Activated CD4-positive, alpha-beta memory T cell treated with anti-CD3 and anti-CD28 coated beads for 36 hours (primary cell): ENCODE measurements at regions of chr1 and their contacts with region 1.

Region 1: GRCh38 chr1:110674337-110675059 is at the start of gene KCNA3:
- DNase-seq: peak; percentile 72
- H3K4me3 Mint-ChIP-seq: peak within 1 kb of the TSS; percentile 95
- H3K27ac Mint-ChIP-seq: peak within 1 kb of the TSS; percentile 97
- H3K4me1 Mint-ChIP-seq: peaks cover 29% of the 10 kb centered on the region
- H3K27me3 Mint-ChIP-seq: no peaks in the 10 kb centered on the region
- total RNA-seq, gene KCNA3: 25.2 to 25.6 TPM

Region 2: DNA sequence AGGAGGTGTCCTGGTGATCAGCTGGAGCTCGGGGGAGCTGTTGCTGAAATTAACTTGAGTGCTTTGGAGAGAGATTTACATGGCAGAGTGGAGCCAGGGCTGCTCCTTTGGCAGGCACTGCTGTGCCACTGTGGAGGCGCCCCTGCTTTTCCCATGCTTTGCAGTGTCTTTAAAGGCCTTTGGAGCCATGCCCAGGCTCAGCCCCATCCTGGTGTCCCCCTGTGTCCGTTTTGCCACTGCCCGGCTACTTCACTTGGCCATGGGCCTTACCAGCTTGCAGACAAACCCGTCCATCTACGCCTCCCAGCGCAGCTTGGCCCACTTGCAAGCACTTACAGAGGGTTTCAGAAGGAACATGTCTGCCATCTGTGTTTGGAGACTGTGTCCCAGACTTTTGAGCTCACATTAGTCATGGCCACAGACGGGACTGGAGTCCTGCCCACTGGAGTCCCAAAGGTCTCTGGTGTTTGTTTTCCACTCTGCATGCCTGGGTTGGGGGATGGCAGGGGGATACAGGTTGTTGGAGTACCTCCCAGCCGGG is 248.8 kb before region 1 on chr1:
- CTCF ChIA-PET with region 1: no interaction called
- POLR2A ChIA-PET with region 1: no interaction called
- intact Hi-C with region 1: no loop called
- DNase-seq: no peak
- H3K4me3 Mint-ChIP-seq: no peak overlapping the region
- H3K27ac Mint-ChIP-seq: no peak overlapping the region
- H3K4me1 Mint-ChIP-seq: no peaks in the 10 kb centered on the region
- H3K27me3 Mint-ChIP-seq: peaks cover 1% of the 10 kb centered on the region

Region 3: DNA sequence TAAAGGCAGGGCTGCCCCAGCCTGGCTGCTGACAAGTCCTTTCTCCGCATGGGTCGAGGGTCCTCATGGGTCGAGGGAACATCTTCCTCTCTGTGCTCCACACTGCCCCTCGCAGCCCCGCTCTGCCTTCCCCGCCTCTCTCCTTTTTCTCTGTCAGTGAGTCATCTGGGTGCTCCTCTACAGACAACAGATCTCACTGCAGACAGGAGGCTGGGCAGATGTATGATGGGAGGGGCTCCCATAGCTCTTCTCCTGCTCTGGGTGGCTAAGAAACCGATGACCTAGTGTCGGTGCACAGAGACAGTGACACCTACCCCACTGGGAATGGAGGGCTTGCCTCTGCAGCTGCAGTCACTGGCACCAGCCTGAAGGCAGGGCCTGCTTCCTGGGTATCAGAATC is 161.0 kb before region 1 on chr1:
- CTCF ChIA-PET with region 1: no interaction called
- POLR2A ChIA-PET with region 1: no interaction called
- intact Hi-C with region 1: no loop called
- DNase-seq: no peak
- H3K4me3 Mint-ChIP-seq: no peak overlapping the region
- H3K27ac Mint-ChIP-seq: no peak overlapping the region
- H3K4me1 Mint-ChIP-seq: no peaks in the 10 kb centered on the region
- H3K27me3 Mint-ChIP-seq: peaks cover 6% of the 10 kb centered on the region

Region 4: DNA sequence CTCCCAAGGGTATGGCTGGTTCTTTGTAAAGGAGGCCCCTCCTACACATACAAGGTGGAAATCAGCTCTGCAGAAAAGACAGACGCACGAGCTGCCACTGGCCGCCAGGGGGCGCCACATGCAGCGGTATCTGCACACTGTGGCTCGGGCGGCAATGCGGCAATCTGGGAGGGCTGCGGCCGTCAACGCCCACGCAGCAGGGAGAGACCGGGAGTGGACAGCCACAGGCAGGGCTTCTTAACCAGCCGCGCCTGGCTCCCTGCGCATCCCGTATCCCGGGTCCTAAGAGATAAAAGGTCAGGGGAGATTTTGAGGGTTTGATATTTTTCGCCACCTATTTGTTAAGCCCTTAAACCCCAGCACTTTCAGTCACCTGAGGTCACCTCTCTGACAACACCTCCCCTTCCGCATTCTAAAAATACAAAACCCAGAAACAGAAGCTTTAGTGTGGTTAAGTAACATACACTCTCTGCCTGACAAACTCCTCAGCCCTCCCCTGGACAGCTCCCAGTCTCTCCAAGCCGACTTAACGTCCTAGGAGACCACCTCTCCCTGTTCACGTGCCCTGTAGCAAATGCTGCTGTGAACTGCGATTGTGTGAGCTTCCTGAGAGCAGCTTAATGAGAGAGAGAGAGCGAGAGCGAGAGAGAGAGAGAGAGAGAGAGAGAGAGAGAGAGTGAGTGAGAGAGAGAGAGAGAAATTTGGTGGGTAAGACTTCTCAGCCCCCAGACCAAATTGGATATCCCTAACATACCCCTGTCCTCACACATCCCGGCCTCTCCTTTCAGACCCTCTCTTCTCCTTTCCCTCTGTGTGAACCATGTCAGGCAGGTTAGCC is 54.9 kb before region 1 on chr1:
- CTCF ChIA-PET with region 1: interaction called, 25 read pairs
- POLR2A ChIA-PET with region 1: interaction called, 5 read pairs
- intact Hi-C with region 1: no loop called
- DNase-seq: peak; percentile 93
- H3K4me3 Mint-ChIP-seq: peak overlapping the region; percentile 75
- H3K27ac Mint-ChIP-seq: peak overlapping the region; percentile 79
- H3K4me1 Mint-ChIP-seq: peaks cover 25% of the 10 kb centered on the region
- H3K27me3 Mint-ChIP-seq: no peaks in the 10 kb centered on the region

Region 5: GRCh38 chr1:110645821-110646735 is 28.4 kb before region 1 on chr1:
- CTCF ChIA-PET with region 1: interaction called, 7 read pairs
- POLR2A ChIA-PET with region 1: interaction called, 92 read pairs
- intact Hi-C with region 1: loop called (anchors 1 kb)
- DNase-seq: no peak
- H3K4me3 Mint-ChIP-seq: peak overlapping the region; percentile 1
- H3K27ac Mint-ChIP-seq: peak overlapping the region; percentile 70
- H3K4me1 Mint-ChIP-seq: peaks cover 42% of the 10 kb centered on the region
- H3K27me3 Mint-ChIP-seq: no peaks in the 10 kb centered on the region

Region 6: GRCh38 chr1:110872745-110873720 is 198.5 kb after region 1 on chr1 and contains the start of gene CD53:
- CTCF ChIA-PET with region 1: no interaction called
- POLR2A ChIA-PET with region 1: interaction called, 41 read pairs
- intact Hi-C with region 1: loop called (anchors 1 kb)
- DNase-seq: peak; percentile 63
- H3K4me3 Mint-ChIP-seq: peak within 1 kb of the TSS; percentile 98
- H3K27ac Mint-ChIP-seq: peak within 1 kb of the TSS; percentile 99
- H3K4me1 Mint-ChIP-seq: peaks cover 37% of the 10 kb centered on the region
- H3K27me3 Mint-ChIP-seq: no peaks in the 10 kb centered on the region
- total RNA-seq, gene CD53: 240 to 246 TPM

Region 7: DNA sequence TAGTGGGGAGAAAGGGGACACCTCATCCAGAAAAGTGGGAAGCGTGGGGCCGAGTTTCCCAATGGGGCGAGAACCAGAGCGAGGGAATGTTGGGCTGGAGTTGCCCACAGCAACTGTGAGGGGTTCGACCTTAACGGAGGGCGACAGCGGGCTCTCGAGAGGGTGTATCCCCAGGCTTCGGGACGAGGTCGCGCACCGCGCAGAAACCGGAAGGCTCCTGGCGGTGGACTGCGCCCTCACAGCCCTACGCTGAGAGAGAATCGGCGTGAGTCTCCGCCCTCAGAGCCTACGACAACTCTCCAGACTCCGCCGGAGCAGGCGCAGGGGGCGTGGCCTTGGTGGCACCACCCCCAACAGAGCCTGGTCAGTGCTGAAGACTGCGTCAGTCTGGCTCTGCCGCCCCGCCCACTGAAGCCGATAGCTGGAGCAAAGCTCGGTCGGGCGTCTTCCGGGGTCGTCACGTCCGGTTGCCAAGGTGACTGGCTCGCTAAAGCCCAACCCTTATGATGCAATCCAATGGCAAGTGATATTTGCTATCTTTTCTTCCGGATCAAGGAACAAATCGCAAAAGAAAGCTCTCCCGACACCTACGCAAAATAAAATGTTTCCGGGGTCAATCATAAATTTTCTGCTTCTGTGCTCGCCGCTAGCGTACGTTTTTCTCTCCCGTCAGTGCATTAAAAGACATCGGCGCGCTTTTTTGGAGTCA is 289.3 kb after region 1 on chr1 and contains the start of gene LRIF1:
- CTCF ChIA-PET with region 1: no interaction called
- POLR2A ChIA-PET with region 1: no interaction called
- intact Hi-C with region 1: loop called (anchors 5 kb)
- DNase-seq: peak; percentile 100
- H3K4me3 Mint-ChIP-seq: peak within 1 kb of the TSS; percentile 84
- H3K27ac Mint-ChIP-seq: peak within 1 kb of the TSS; percentile 96
- H3K4me1 Mint-ChIP-seq: peaks cover 32% of the 10 kb centered on the region
- H3K27me3 Mint-ChIP-seq: peaks cover 9% of the 10 kb centered on the region
- total RNA-seq, gene LRIF1: 12.9 to 14.4 TPM